ENCODE measurements at regions of chr11 and their contacts with region 1.

Region 1: DNA sequence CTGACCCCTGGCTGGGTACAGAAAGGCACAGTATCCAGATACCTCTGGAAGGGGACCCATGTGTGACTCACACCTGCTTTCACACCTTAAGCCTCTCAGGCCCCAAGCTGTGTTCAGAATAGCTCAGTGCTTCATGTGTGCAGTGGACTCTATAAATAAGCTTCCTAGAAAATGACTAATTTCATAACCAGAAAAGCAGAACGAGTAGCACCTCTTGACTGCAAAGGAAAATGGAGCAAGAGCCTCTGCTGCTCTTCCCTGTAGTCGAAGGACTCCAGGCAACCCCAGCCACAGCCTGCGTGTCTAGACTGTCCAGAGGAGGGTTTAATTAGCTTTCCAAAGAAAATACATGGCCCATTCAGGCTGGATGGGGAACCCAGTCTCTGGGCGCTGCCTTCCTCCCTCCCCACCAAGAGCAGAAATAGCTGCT is 23.1 kb downstream of the PTPN5 start:
- DNase-seq: no peak
- ATAC-seq: no peak
- H3K4me3 ChIP-seq: no peak overlapping the region
- H3K4me3 Mint-ChIP-seq: no peak overlapping the region
- H3K27ac ChIP-seq: no peak overlapping the region
- H3K27ac Mint-ChIP-seq: no peak overlapping the region
- H3K4me1 ChIP-seq: no peaks in the 10 kb centered on the region
- H3K4me1 Mint-ChIP-seq: peaks cover 4% of the 10 kb centered on the region
- H3K27me3 ChIP-seq: no peaks in the 10 kb centered on the region
- H3K27me3 Mint-ChIP-seq: peaks cover 20% of the 10 kb centered on the region
- CTCF ChIP-seq: no peak

Region 2: DNA sequence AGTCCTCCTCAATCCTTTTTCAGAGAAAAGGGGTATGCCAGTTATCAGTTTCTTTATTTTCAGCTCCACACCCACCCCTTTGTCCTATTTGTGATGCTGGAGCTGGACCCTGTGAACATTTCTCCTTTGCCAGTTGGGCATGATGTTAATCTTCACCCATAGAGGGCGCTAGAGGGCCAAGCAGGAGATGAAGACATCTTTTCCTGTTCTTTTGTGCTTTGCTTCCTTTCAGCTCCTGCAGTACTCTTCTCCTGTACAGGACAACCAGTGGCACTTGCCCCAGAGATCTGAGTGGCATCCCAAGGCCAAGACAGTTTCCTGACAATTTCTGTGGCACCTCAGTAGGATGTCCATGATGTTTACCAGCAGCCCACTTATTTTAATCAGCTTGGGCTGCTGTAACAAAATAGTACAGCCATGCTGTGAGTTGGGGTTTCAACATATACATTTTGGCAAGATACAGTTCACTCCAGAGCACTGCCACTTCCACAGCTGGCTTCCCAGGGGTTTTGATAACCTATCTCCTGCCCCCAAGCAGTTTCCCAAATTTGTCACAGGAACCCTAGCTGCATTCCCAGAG is 524.6 kb before region 1 on chr11:
- CTCF ChIA-PET with region 1: no interaction called
- POLR2A ChIA-PET with region 1: no interaction called
- intact Hi-C with region 1: loop called (anchors 1 to 5 kb)
- DNase-seq: peak; percentile 14 to 81 (median 53)
- ATAC-seq: no peak
- H3K4me3 ChIP-seq: no peak overlapping the region
- H3K4me3 Mint-ChIP-seq: no peak overlapping the region
- H3K27ac ChIP-seq: no peak overlapping the region
- H3K27ac Mint-ChIP-seq: no peak overlapping the region
- H3K4me1 ChIP-seq: no peaks in the 10 kb centered on the region
- H3K4me1 Mint-ChIP-seq: peaks cover 6% of the 10 kb centered on the region
- H3K27me3 ChIP-seq: no peaks in the 10 kb centered on the region
- H3K27me3 Mint-ChIP-seq: peaks cover 13% of the 10 kb centered on the region
- CTCF ChIP-seq: peak; percentile 64

Measured in CD8-positive, alpha-beta T cell (primary cell).